ENCODE measurements at regions of chr9 and their contacts with region 1.

Region 1: DNA sequence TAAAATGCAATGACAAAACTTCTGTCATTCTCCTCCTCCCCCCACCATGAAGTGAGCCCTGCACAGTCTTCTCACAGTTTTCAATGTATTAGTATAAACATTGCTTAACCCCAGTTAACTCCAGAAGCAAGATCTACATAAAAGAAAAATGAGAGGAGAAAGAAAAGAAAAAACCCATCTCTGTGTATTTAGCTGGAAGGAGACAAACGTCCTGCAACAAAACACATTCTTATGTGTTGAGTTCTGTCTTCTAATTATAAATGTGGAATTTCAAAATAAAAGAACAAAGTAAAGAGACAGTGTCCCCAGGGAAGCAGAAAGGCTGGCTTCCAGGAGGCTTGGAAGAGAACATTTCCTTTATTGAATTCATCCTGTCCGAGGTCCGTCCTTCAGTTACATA is 491.9 kb upstream of the TUSC1 start:
- DNase-seq: no peak
- ATAC-seq: 0 out of 2 replicates have a peak, but pooled peaks have one; percentile 12
- H3K4me3 ChIP-seq: no peak overlapping the region; the same call in 1 of the 2 replicates
- H3K27ac ChIP-seq: peak overlapping the region; percentile 68
- H3K4me1 ChIP-seq: peaks cover 50% of the 10 kb centered on the region
- H3K27me3 ChIP-seq: no peaks in the 10 kb centered on the region
- CTCF ChIP-seq: no peak

Region 2: DNA sequence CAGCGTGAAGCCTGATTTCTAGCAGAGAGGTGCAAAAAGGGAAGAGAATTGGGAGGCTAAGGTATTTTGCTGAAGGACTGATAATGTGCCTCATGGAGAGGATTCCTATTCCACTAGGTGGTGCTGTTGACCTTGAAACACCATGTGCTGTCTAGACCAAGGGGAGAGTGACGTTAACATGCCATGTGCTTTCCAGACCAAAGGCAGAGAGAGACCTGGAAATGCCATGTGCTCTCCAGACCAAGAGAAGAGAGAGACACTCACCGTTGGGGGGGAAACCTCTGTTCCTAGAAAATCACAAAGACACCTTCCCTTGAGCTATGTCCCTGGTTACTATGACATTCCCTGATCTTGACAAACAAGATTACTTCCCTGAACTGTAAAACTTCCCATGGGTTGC is 206.0 kb before region 1 on chr9:
- CTCF ChIA-PET with region 1: no interaction called
- POLR2A ChIA-PET with region 1: no interaction called
- intact Hi-C with region 1: loop called (anchors 10 kb)
- DNase-seq: peak; percentile 90
- ATAC-seq: peak; percentile 86
- H3K4me3 ChIP-seq: no peak overlapping the region
- H3K27ac ChIP-seq: peak overlapping the region; percentile 23
- H3K4me1 ChIP-seq: no peaks in the 10 kb centered on the region
- H3K27me3 ChIP-seq: no peaks in the 10 kb centered on the region
- CTCF ChIP-seq: peak; percentile 73

Region 3: GRCh38 chr9:26086396-26086795 is 83.8 kb before region 1 on chr9:
- CTCF ChIA-PET with region 1: no interaction called
- POLR2A ChIA-PET with region 1: no interaction called
- intact Hi-C with region 1: loop called (anchors 10 kb)
- DNase-seq: no peak
- ATAC-seq: no peak
- H3K4me3 ChIP-seq: no peak overlapping the region
- H3K27ac ChIP-seq: no peak overlapping the region
- H3K4me1 ChIP-seq: peaks cover 13% of the 10 kb centered on the region
- H3K27me3 ChIP-seq: no peaks in the 10 kb centered on the region
- CTCF ChIP-seq: no peak

Measured in PC-3 (cell line).